ENCODE measurements at regions of chr1 and their contacts with region 1.

Region 1: DNA sequence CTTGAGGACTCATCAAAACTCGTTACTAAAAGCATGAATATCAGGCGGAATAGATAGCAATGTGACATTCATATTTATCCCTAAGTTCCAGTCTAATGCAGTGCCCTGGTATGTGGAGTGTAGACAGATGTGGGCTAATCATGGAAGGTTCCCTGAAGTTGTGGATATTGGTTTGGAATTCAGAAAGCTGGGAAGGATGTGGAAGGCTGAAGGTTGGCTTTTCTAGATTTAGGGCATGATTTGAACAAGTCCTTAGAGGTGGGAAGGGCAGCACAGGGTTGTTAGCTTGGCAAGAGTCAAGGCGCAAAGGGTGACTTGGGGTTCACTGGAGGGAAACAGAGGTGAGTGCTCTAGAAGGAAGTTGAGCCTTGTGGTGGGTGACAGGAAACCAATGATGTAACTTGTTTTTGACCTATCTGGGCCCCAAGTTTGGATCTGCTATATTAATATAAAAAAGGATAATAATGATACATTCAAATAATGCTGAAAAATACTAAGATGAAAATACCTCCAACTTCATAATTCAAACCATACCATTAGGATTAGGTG is 21.9 kb downstream of the LGALS8 start:
- H3K4me3 Mint-ChIP-seq: no peak overlapping the region
- H3K27ac Mint-ChIP-seq: no peak overlapping the region
- H3K4me1 Mint-ChIP-seq: peaks cover 6% of the 10 kb centered on the region
- H3K27me3 Mint-ChIP-seq: no peaks in the 10 kb centered on the region

Region 2: DNA sequence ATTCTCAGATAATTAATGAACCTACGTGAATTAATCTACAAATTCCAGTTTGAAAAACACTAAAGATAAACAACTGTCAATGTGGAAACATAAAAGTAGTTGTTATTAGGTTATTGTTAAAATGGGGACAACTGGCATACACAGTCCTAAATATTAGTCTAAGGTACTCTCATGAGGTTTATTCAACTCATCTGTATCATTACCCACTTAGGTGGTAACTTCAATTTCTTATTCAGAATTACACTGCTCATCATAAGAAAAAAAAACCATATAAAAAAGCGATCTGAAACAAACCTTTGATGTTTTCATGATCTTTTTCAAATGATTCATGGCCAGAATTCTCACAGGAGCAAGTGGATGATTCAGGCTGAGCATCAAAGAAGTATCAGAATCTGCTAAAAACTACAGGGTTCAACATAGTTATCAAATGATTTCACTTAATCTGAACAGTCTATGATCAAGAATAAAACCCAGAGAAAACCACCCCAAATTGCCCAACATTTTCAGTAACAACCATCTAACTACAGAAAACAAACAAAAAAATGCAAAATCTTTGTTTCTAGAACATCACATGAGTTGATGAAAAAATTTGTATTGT is 45.0 kb after region 1 on chr1:
- intact Hi-C with region 1: loop called (anchors 5 kb)
- H3K4me3 Mint-ChIP-seq: no peak overlapping the region
- H3K27ac Mint-ChIP-seq: no peak overlapping the region
- H3K4me1 Mint-ChIP-seq: no peaks in the 10 kb centered on the region
- H3K27me3 Mint-ChIP-seq: no peaks in the 10 kb centered on the region

Measured in dendritic cell treated with granulocyte-macrophage colony-stimulating factor and Interleukin-4, amounts not matched to agents 40 ng/mL and 50 ng/mL, for 4 days (primary cell).